CD14-positive monocyte (primary cell): ENCODE measurements at regions of chr16 and their contacts with region 1.

Region 1: GRCh38 chr16:85114909-85115567 is 2.8 kb upstream of the CIBAR2 start:
- DNase-seq: peak; percentile 78 to 80 (median 80)
- H3K4me3 ChIP-seq: peak overlapping the region in 2 of 3 experiments; percentile 14 to 63
- H3K4me3 Mint-ChIP-seq: peak overlapping the region; percentile 75 to 91
- H3K27ac ChIP-seq: peak overlapping the region; percentile 46 to 73
- H3K27ac Mint-ChIP-seq: peak overlapping the region; percentile 91 to 97 (median 95)
- H3K4me1 ChIP-seq: peaks cover 7 to 20% of the 10 kb centered on the region in 2 donors
- H3K4me1 Mint-ChIP-seq: peaks cover 14% of the 10 kb centered on the region
- H3K27me3 ChIP-seq: no peaks in the 10 kb centered on the region
- H3K27me3 Mint-ChIP-seq: peaks cover 2 to 5% (median 3%) of the 10 kb centered on the region in 3 donors
- CTCF ChIP-seq: peak; percentile 89

Region 2: GRCh38 chr16:85157813-85158742 is 43.0 kb after region 1 on chr16:
- intact Hi-C with region 1: loop called in 1 of 2 experiments (anchors 5 kb)
- DNase-seq: peak; percentile 53 to 59 (median 57)
- H3K4me3 ChIP-seq: peak overlapping the region; percentile 36 to 67 (median 45)
- H3K4me3 Mint-ChIP-seq: peak overlapping the region; percentile 83 to 89
- H3K27ac ChIP-seq: peak overlapping the region; percentile 65 to 73
- H3K27ac Mint-ChIP-seq: peak overlapping the region; percentile 81 to 97 (median 93)
- H3K4me1 ChIP-seq: peaks cover 26 to 28% of the 10 kb centered on the region in 2 donors
- H3K4me1 Mint-ChIP-seq: peaks cover 32% of the 10 kb centered on the region
- H3K27me3 ChIP-seq: no peaks in the 10 kb centered on the region
- H3K27me3 Mint-ChIP-seq: peaks cover 0 to 10% (median 5%) of the 10 kb centered on the region in 3 donors
- CTCF ChIP-seq: no peak

Region 3: DNA sequence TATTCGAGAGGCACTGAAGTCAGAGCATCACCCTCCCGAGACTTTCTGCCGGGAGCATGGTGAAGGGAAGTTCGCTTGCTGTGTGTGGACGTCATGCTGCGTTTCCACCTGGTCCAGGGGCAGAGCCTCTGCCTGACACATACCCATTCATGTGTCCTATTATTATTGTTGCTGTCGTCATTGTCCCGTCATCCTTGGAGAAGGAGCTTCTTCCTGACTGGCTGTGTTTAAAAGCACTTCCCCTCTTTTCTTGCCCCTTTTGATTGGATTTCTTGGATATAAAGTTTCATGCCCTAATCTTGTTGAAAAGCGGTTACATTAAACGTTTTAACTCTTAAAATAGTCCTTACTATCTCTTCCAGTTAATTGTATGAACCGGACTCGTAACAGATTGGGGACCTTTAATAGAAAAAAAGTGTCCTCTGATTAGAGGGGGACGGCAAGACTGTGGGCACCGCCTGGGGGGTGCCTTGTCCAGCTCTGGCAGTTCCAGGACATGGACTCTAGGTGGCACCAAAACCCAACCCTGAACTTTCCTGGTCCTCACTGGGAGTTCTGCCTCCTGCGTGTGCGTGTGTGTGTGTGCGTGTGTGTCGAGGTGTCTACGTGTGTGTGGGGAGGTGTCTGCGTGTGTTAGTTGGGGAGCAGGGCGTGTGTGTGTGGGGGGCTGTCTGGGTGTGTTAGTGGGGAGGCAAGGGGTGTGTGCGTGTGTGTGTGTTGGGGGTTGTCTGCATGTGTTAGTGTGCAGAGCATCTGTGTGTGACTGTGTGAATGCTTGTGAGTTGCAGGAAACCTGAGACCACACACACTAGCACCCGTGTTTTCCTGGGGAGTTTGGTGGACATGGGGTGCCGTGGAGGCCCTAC is 130.5 kb after region 1 on chr16:
- intact Hi-C with region 1: loop called in 1 of 2 experiments (anchors 5 kb)
- DNase-seq: peak; percentile 35 to 55 (median 52)
- H3K4me3 ChIP-seq: no peak overlapping the region
- H3K4me3 Mint-ChIP-seq: peak overlapping the region in 1 of 2 donors; percentile 46
- H3K27ac ChIP-seq: no peak overlapping the region
- H3K27ac Mint-ChIP-seq: peak overlapping the region in 1 of 7 donors; percentile 43
- H3K4me1 ChIP-seq: no peaks in the 10 kb centered on the region
- H3K4me1 Mint-ChIP-seq: peaks cover 2% of the 10 kb centered on the region
- H3K27me3 ChIP-seq: no peaks in the 10 kb centered on the region
- H3K27me3 Mint-ChIP-seq: peaks cover 8 to 13% (median 13%) of the 10 kb centered on the region in 3 donors
- CTCF ChIP-seq: peak; percentile 83